Ascending aorta (tissue), 2 donors: ENCODE measurements at regions of chr17 and their contacts with region 1.

Region 1: DNA sequence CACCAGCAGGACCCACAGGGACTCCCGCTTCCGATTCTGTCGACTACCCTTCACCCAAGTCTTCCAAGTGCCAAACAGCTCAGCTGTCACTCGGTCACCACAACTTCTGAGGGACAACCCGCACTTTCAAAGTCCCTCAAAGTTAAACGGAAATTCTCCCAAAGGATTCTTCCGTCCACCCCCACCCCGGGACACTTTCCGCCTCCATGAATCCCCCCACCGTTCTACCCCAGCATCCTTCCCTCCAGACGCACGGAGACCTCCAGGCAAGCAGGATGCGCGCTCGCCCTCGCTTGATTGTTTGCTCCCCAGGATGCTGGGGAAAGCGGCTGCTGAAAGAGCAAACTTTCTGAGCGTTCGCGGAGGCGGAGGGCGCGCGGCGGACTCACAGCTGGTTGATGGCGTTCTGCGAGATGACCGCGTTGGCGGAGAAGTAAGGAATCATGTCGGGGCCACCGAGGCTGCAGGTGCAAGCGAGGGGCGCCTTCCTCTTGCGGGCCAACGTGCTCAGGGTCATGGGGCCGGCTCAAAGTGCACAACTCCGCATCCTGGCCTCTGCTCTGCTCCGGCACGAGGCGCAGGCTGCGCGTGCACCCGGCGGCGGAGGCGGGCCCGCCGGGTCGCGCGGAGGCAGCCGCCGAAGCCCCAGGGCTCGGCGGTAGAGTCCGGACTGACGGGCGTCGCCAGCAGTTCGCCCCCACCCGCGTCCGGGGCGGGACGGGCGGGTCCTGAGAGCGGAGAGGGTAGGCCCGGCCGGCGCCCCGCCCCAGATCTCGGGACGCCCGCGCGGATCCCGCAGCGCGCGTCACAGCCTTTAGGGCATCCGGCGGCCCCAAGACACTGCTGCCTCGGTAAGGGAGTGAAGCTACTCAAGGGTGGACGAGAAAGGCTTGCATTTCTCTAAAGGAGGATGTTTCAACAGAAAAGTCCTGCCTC is 138.3 kb upstream of the CORO6 start:
- DNase-seq: peak; percentile 73 to 95
- H3K4me3 ChIP-seq: peak overlapping the region; percentile 82 to 88
- H3K27ac ChIP-seq: peak overlapping the region; percentile 63 to 74
- H3K4me1 ChIP-seq: no peaks in the 10 kb centered on the region
- H3K27me3 ChIP-seq: no peaks in the 10 kb centered on the region
- CTCF ChIP-seq: no peak

Region 2: DNA sequence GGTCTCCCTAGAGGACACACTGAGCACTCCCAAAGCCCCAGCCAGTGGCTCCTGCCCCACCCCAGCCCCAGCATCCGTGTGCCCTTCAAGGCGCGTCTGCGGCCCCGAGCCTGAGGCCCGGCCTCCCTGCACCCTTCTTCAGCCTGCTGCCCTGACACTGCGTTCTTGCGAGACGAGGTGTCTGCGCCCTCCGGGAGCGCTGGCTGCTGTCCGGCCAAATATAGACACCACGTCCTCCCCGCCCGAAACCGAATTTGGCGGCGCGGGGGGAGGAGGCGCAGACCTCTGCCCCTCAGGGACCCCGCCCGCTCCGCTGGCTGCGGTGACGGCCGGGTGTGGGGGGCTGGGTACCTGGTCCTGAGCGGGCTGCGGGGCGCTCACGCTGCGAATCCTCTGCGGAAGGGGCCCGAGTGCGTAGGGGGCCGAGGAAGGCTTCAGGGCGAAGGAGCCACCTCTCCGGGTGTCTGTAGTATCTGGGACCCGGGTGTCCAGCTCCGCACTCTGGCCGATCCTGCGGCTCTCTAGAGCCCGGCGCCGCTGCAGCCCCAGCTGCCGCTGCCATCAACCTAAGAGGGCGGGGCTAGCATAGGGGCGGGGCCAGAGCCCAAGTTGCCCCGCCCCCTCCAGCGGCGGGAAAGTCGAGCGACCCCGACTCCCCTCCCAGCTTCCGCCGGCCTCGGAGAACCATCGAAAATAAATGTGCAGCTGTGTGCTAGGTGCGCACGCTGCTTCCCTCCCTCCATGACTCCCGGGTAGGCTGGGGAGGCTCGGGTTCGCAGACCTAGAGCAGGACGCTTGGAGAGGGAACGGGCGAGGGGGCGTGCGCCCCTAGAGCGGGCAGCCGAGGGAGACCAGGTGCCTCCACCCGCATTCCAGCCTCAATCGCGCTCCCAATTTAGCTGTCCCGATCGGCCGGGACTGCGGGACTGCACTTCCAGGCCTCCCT is 138.4 kb before region 1 on chr17 and contains the start of gene CORO6:
- intact Hi-C with region 1: loop called (anchors 2 kb)
- DNase-seq: peak in 1 of 2 donors; percentile 75
- H3K4me3 ChIP-seq: peak within 1 kb of the TSS; percentile 61 to 79
- H3K27ac ChIP-seq: peak within 1 kb of the TSS; percentile 37 to 50
- H3K4me1 ChIP-seq: peaks cover 4 to 7% of the 10 kb centered on the region in 2 donors
- H3K27me3 ChIP-seq: no peaks in the 10 kb centered on the region
- CTCF ChIP-seq: no peak
- total RNA-seq, gene CORO6: 22.0 TPM

Region 3: DNA sequence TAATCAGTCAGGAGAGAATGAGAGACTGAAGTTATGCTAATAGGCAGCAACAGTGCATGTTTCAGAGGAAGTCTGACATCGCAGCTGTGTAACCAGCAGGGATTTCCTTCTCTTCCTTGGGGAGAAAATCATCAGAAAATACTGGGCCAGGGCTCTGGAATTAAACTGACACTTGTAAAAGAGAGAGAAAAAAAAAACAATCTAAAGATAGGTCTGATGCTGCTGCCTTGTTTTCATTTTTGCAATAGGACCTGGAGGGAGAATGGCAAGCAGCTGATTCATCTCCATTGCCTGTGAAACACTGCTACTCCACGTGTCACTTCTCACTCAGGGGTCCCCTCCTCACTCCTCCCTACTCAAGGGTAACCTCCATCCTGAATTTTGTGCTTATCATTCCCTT is 120.6 kb before region 1 on chr17:
- intact Hi-C with region 1: loop called (anchors 1 kb)
- DNase-seq: no peak
- H3K4me3 ChIP-seq: no peak overlapping the region
- H3K27ac ChIP-seq: peak overlapping the region; percentile 41 to 45
- H3K4me1 ChIP-seq: peaks cover 7 to 44% of the 10 kb centered on the region in 2 donors
- H3K27me3 ChIP-seq: no peaks in the 10 kb centered on the region
- CTCF ChIP-seq: no peak

Region 4: GRCh38 chr17:29710891-29711418 is 50.1 kb before region 1 on chr17:
- intact Hi-C with region 1: no loop called
- DNase-seq: no peak
- H3K4me3 ChIP-seq: no peak overlapping the region
- H3K27ac ChIP-seq: no peak overlapping the region
- H3K4me1 ChIP-seq: peaks cover 0 to 11% of the 10 kb centered on the region in 2 donors
- H3K27me3 ChIP-seq: no peaks in the 10 kb centered on the region
- CTCF ChIP-seq: no peak